ENCODE measurements at regions of chr1 and their contacts with region 1.

Region 1: DNA sequence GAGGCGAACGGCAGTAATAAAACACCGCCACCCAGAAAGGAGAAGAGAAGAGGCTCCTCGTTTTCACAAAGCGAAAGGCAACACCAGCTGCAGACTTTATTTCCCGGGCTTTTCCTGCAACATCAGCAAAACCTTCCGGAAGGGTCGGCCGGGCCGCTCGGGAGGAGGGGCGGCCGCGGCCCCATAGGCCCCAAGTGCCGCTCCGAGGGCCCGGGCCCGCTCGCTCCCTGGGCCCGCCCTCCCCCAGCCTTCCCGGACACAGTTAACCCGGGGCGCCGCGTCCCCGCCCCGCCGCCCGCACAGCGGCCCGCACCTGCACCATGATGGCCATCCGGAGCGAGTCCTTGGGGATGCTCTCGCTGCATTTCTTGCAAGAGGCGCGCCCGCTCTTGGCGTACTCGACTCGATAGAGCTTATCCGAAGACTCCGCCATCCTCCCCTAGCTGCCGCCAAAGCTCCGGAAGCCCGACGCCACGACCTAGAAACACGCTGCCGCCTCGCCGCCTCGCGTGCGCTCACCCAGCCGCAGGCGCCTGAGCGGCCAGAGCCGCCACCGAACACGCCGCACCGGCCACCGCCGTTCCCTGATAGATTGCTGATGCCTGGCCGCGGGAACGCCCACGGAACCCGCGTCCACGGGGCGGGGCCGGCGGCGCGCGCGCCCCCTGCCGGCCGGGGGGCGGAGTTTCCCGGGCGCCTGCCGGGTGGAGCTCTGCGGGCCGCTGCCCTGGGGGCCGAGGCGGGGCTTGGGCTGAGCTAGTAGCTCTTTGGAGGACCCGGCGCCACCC is at the start of gene PARP1:
- DNase-seq: peak; percentile 83 to 93 (median 89)
- ATAC-seq: peak; percentile 94
- H3K4me3 ChIP-seq: peak within 1 kb of the TSS; percentile 82
- H3K4me3 Mint-ChIP-seq: peak within 1 kb of the TSS; percentile 89 to 99 (median 94)
- H3K27ac ChIP-seq: peak within 1 kb of the TSS; percentile 74
- H3K27ac Mint-ChIP-seq: peak within 1 kb of the TSS; percentile 68 to 96 (median 93)
- H3K4me1 ChIP-seq: peaks cover 23 to 30% of the 10 kb centered on the region in 2 donors
- H3K4me1 Mint-ChIP-seq: peaks cover 37 to 46% (median 40%) of the 10 kb centered on the region in 7 donors
- H3K27me3 ChIP-seq: no peaks in the 10 kb centered on the region
- H3K27me3 Mint-ChIP-seq: peaks cover 0 to 3% (median 0%) of the 10 kb centered on the region in 5 donors
- total RNA-seq, gene PARP1: 63.6 to 165 (median 89.3) TPM

Region 2: GRCh38 chr1:226308723-226309315 is 98.9 kb before region 1 on chr1 and contains the start of gene LIN9:
- CTCF ChIA-PET with region 1: no interaction called
- POLR2A ChIA-PET with region 1: interaction called, 8 read pairs
- intact Hi-C with region 1: loop called (anchors 2 kb)
- DNase-seq: peak; percentile 83 to 94 (median 88)
- ATAC-seq: peak; percentile 97
- H3K4me3 ChIP-seq: peak within 1 kb of the TSS; percentile 99
- H3K4me3 Mint-ChIP-seq: peak within 1 kb of the TSS; percentile 88 to 95 (median 92)
- H3K27ac ChIP-seq: peak within 1 kb of the TSS; percentile 76
- H3K27ac Mint-ChIP-seq: peak within 1 kb of the TSS; percentile 34 to 97 (median 85)
- H3K4me1 ChIP-seq: peaks cover 5% of the 10 kb centered on the region in 2 donors
- H3K4me1 Mint-ChIP-seq: peaks cover 14 to 37% (median 22%) of the 10 kb centered on the region in 7 donors
- H3K27me3 ChIP-seq: peaks cover 0 to 4% of the 10 kb centered on the region in 2 donors
- H3K27me3 Mint-ChIP-seq: peaks cover 5 to 19% (median 14%) of the 10 kb centered on the region in 5 donors
- total RNA-seq, gene LIN9: 2.0 to 8.0 (median 5.0) TPM

Region 3: DNA sequence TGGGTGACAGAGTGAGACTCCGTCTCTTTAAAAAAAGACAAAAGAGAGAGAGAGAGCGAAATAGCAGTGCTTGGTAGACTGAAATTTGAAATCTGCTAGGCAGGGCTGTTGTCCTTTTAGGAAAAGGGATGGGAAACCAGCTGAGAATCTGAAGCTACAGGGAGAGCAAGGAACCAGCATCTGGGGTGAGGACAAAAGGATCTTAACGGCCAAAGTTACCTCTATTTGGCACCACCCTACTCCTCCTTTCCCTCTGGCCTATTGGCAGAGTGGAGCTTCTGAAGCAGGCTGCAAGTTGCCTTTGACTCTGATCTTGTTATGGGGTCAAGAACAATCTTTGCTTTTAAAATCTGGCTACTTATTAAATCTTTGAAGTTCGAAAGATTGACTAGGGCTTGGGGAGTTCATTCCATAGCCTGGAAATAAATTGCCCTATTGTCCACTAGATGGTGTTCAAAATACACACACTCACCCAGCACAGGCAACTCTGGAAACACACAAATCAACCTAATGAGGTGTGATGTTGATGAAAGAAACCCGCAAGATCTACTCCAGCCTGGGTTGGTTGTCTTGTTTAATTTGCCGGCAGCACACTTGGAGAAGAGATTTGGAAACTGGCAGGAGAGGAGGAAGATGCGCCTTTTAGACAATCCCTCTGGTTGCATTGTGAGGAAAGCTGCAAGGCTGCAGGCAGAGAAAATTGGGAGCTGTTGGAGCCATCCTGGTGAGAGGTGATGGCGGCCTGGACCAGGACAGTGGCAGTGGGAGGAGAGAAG is 16.7 kb after region 1 on chr1:
- CTCF ChIA-PET with region 1: interaction called, 15 read pairs
- POLR2A ChIA-PET with region 1: interaction called, 29 read pairs
- intact Hi-C with region 1: loop called (anchors 1 to 2 kb)
- DNase-seq: peak in 5 of 9 donors; percentile 29 to 54 (median 44)
- ATAC-seq: peak; percentile 68
- H3K4me3 ChIP-seq: peak overlapping the region; percentile 33
- H3K4me3 Mint-ChIP-seq: peak overlapping the region in 1 of 10 donors; percentile 21
- H3K27ac ChIP-seq: no peak overlapping the region
- H3K27ac Mint-ChIP-seq: no peak overlapping the region
- H3K4me1 ChIP-seq: peaks cover 11% of the 10 kb centered on the region in 2 donors
- H3K4me1 Mint-ChIP-seq: peaks cover 15 to 34% (median 21%) of the 10 kb centered on the region in 7 donors
- H3K27me3 ChIP-seq: no peaks in the 10 kb centered on the region
- H3K27me3 Mint-ChIP-seq: peaks cover 0 to 8% (median 0%) of the 10 kb centered on the region in 5 donors

Region 4: GRCh38 chr1:226444901-226445300 is 37.2 kb after region 1 on chr1:
- CTCF ChIA-PET with region 1: interaction called, 14 read pairs
- POLR2A ChIA-PET with region 1: interaction called, 15 read pairs
- intact Hi-C with region 1: loop called (anchors 1 kb)
- DNase-seq: peak; percentile 18 to 89 (median 78)
- ATAC-seq: peak; percentile 98
- H3K4me3 ChIP-seq: no peak overlapping the region
- H3K4me3 Mint-ChIP-seq: peak overlapping the region; percentile 41 to 74 (median 58)
- H3K27ac ChIP-seq: no peak overlapping the region
- H3K27ac Mint-ChIP-seq: peak overlapping the region; percentile 64 to 96 (median 83)
- H3K4me1 ChIP-seq: peaks cover 16 to 26% of the 10 kb centered on the region in 2 donors
- H3K4me1 Mint-ChIP-seq: peaks cover 26 to 41% (median 35%) of the 10 kb centered on the region in 7 donors
- H3K27me3 ChIP-seq: no peaks in the 10 kb centered on the region
- H3K27me3 Mint-ChIP-seq: peaks cover 0 to 51% (median 0%) of the 10 kb centered on the region in 5 donors

Region 5: GRCh38 chr1:226547754-226548191 is 140.1 kb after region 1 on chr1:
- CTCF ChIA-PET with region 1: interaction called, 5 read pairs
- POLR2A ChIA-PET with region 1: no interaction called
- intact Hi-C with region 1: loop called in 1 of 2 experiments (anchors 5 kb)
- DNase-seq: peak in 8 of 9 donors; percentile 17 to 56 (median 50)
- ATAC-seq: peak; percentile 75
- H3K4me3 ChIP-seq: no peak overlapping the region
- H3K4me3 Mint-ChIP-seq: peak overlapping the region in 9 of 10 donors; percentile 17 to 70 (median 51)
- H3K27ac ChIP-seq: no peak overlapping the region
- H3K27ac Mint-ChIP-seq: no peak overlapping the region
- H3K4me1 ChIP-seq: peaks cover 15 to 17% of the 10 kb centered on the region in 2 donors
- H3K4me1 Mint-ChIP-seq: peaks cover 0 to 19% (median 10%) of the 10 kb centered on the region in 7 donors
- H3K27me3 ChIP-seq: no peaks in the 10 kb centered on the region
- H3K27me3 Mint-ChIP-seq: peaks cover 37 to 77% (median 39%) of the 10 kb centered on the region in 5 donors

Region 6: DNA sequence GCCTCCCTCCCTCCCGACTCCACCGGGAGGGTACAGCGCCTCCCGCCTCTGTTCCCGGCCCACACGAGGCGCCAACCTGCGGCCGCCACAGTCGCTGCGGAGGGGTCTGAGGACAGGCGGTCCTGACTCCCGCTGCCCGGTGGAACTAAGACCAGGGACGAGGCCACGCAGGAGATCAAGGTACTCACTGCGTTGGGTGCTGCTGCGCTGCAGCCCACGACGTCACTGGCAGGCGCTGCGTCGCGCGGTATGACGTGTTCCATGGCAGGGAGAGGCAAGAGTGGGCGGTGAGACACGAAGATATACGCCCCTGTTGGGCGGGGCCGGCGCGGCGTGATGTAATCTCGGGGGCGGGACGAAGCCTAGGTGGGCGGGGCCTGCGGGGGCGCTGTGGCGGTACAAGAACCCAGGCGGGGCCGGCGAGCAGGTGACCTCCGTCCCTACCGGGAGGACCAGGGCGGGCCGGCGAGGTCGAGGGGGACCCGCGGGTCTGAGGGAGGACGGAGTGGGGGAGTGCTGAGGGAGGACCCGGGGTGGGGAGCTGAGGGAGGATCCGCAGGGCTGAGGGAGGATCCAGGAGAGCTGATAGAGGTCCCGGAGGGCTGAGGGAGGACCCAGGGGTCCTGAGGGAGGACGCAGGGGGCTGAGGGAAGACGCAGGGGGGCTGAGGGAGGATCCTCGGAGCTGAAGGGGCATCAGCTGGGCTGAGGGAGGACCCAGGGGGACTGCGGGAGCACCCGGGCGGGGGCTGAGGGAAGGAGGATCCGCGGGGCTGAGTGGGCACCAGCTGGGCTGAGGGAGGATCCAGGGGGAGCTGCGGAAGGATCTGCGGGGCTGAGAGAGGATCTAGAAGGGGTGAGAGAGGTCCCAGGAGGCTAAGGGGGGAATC is 1701.6 kb after region 1 on chr1 and contains the start of gene MRPL55:
- CTCF ChIA-PET with region 1: no interaction called
- POLR2A ChIA-PET with region 1: no interaction called
- intact Hi-C with region 1: loop called in 1 of 2 experiments (anchors 10 kb)
- DNase-seq: peak; percentile 97 to 100 (median 99)
- ATAC-seq: peak; percentile 99
- H3K4me3 ChIP-seq: peak within 1 kb of the TSS; percentile 100
- H3K4me3 Mint-ChIP-seq: peak within 1 kb of the TSS; percentile 87 to 95 (median 93)
- H3K27ac ChIP-seq: peak within 1 kb of the TSS; percentile 94
- H3K27ac Mint-ChIP-seq: peak within 1 kb of the TSS; percentile 88 to 98 (median 95)
- H3K4me1 ChIP-seq: peaks cover 9 to 16% of the 10 kb centered on the region in 2 donors
- H3K4me1 Mint-ChIP-seq: peaks cover 5 to 37% (median 26%) of the 10 kb centered on the region in 7 donors
- H3K27me3 ChIP-seq: no peaks in the 10 kb centered on the region
- H3K27me3 Mint-ChIP-seq: peaks cover 0 to 3% (median 0%) of the 10 kb centered on the region in 5 donors
- total RNA-seq, gene MRPL55: 34.3 to 79.3 (median 65.2) TPM